ENCODE measurements at regions of chr3 and their contacts with region 1.

Region 1: DNA sequence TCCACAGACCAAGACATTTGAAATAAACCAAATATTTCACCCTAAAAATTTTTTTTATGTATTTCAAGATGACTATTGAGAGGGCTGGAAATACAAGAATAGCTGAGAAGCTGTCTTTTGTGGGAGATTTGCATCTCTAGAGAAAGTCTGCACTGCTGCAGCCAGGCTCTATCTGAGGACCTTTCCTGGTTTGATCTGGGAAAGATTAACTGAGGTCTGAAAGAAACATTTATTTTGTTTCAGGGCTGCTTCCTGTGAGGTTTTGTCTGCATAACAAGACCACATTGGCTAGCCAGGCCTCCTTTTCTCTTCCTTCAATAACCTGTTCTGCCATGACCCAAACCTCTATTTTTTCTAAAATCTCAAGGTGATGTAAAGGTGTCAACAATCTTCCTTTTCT is 117.5 kb upstream of the ARHGEF26 start:
- DNase-seq: no peak
- H3K4me3 ChIP-seq: no peak overlapping the region
- H3K27ac ChIP-seq: no peak overlapping the region
- H3K4me1 ChIP-seq: peaks cover 0 to 2% (median 0%) of the 10 kb centered on the region in 4 experiments; a peak in 1 of 7 replicates
- H3K27me3 ChIP-seq: no peaks in the 10 kb centered on the region
- CTCF ChIP-seq: no peak
- EP300 ChIP-seq: no peak
- POLR2A ChIP-seq: no peak
- RAD21 ChIP-seq: no peak

Region 2: DNA sequence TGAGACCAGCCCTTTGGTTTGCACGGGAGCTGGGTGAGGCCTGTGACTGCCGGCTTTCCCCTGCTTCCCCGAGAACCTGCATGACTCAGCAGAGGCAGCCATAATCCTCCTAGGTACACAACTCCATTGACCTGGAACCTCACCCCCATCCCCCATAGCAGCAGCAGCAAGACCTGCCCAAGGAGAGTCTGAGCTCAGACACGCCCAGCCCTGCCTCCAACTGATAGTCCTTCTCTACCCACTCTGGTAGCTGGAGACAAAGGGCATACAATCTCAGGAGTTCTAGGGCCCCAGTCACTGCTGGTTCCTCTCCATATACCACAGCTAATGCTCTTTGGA is 23.4 kb before region 1 on chr3:
- CTCF ChIA-PET with region 1: no interaction called
- POLR2A ChIA-PET with region 1: no interaction called
- DNase-seq: no peak
- H3K4me3 ChIP-seq: no peak overlapping the region
- H3K27ac ChIP-seq: no peak overlapping the region
- H3K4me1 ChIP-seq: no peaks in the 10 kb centered on the region
- H3K27me3 ChIP-seq: no peaks in the 10 kb centered on the region
- CTCF ChIP-seq: no peak
- EP300 ChIP-seq: no peak
- POLR2A ChIP-seq: no peak
- RAD21 ChIP-seq: no peak

Region 3: DNA sequence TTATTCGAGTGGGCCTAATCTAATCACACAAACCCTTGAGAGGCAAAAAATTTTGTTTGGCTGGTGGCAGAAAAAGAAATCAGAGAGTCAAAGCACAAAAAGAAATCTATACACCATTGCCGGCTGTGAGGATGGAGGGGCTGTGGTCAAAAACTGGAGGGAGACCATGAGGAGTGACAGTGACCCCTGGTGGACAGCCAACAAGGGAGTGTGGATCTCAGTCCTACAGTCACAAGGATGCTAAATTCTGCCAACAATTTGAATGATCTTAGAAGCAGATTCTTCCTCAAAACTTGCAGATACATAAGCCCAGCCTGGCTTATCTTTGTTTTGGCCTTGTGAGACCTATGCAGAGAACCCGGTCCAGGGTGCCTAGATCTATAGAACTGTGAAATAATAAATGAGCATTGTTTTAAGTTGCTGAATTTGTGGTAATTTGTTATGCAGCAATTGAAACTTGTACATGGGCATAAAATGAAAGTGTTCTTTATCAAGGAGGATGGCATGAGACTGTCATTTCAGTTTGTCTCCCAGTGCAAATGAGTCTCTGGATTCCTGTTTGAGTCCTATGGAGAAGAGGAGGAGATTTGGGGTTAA is 14.5 kb after region 1 on chr3:
- CTCF ChIA-PET with region 1: interaction called, 14 read pairs
- POLR2A ChIA-PET with region 1: no interaction called
- DNase-seq: peak; percentile 21 to 73
- H3K4me3 ChIP-seq: no peak overlapping the region
- H3K27ac ChIP-seq: no peak overlapping the region
- H3K4me1 ChIP-seq: peaks cover 0 to 3% (median 0%) of the 10 kb centered on the region in 4 experiments; a peak in 1 of 7 replicates
- H3K27me3 ChIP-seq: no peaks in the 10 kb centered on the region
- CTCF ChIP-seq: peak; percentile 64 to 85 (median 72)
- EP300 ChIP-seq: no peak
- POLR2A ChIP-seq: no peak
- RAD21 ChIP-seq: peak; percentile 70 to 74

Measured in H1 (cell line).